Activated T-helper 2 cell treated with anti-CD3 and anti-CD28 coated beads, Interferon-gamma antibody, Interleukin-2, Interleukin-4, amounts not matched to agents 10 μg/mL and 5 μg/mL and 100 μg/mL, durations not matched to agents 14 hours and 24 hours and 36 hours (primary cell): ENCODE measurements at regions of chrX and their contacts with region 1.

Region 1: DNA sequence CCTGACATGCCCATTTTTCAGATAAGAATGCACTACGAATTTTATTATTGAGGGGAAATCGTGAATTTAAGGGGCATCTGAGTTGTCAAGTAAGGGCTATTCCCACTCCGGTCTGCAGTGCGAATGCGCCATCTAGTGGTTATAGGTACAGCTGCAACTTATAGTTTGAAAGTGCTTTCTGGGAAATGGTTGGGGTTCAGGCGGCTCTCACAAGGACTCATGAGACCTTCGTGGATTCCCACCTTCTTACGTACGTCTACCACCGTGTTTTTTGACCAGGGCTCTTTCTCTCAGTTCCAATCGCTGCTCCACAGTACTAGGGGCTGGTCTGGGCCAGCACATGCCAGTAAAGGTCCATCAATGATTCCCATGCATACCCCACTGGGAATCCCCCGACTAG is 12.3 kb downstream of the MSL3 start:
- DNase-seq: no peak
- H3K4me3 Mint-ChIP-seq: no peak overlapping the region
- H3K27ac Mint-ChIP-seq: peak overlapping the region; percentile 60
- H3K4me1 Mint-ChIP-seq: peaks cover 28% of the 10 kb centered on the region
- H3K27me3 Mint-ChIP-seq: no peaks in the 10 kb centered on the region

Region 2: GRCh38 chrX:11724122-11725017 is 46.0 kb before region 1 on chrX:
- intact Hi-C with region 1: loop called (anchors 2 kb)
- DNase-seq: no peak
- H3K4me3 Mint-ChIP-seq: no peak overlapping the region
- H3K27ac Mint-ChIP-seq: no peak overlapping the region
- H3K4me1 Mint-ChIP-seq: no peaks in the 10 kb centered on the region
- H3K27me3 Mint-ChIP-seq: peaks cover 9% of the 10 kb centered on the region

Region 3: GRCh38 chrX:11864171-11864570 is 93.9 kb after region 1 on chrX:
- intact Hi-C with region 1: no loop called
- DNase-seq: no peak
- H3K4me3 Mint-ChIP-seq: no peak overlapping the region
- H3K27ac Mint-ChIP-seq: no peak overlapping the region
- H3K4me1 Mint-ChIP-seq: peaks cover 4% of the 10 kb centered on the region
- H3K27me3 Mint-ChIP-seq: no peaks in the 10 kb centered on the region